Prostate gland (tissue), 2 donors: ENCODE measurements at regions of chr11 and their contacts with region 1.

Region 1: GRCh38 chr11:47715082-47715669 is at the start of gene AGBL2:
- DNase-seq: peak; percentile 52
- H3K4me3 ChIP-seq: peak within 1 kb of the TSS; percentile 64 to 81
- H3K27ac ChIP-seq: peak within 1 kb of the TSS; percentile 69 to 75
- H3K4me1 ChIP-seq: no peaks in the 10 kb centered on the region
- H3K27me3 ChIP-seq: no peaks in the 10 kb centered on the region
- CTCF ChIP-seq: no peak
- POLR2A ChIP-seq: peak; percentile 67
- total RNA-seq, gene AGBL2: 3.6 to 4.4 TPM

Region 2: DNA sequence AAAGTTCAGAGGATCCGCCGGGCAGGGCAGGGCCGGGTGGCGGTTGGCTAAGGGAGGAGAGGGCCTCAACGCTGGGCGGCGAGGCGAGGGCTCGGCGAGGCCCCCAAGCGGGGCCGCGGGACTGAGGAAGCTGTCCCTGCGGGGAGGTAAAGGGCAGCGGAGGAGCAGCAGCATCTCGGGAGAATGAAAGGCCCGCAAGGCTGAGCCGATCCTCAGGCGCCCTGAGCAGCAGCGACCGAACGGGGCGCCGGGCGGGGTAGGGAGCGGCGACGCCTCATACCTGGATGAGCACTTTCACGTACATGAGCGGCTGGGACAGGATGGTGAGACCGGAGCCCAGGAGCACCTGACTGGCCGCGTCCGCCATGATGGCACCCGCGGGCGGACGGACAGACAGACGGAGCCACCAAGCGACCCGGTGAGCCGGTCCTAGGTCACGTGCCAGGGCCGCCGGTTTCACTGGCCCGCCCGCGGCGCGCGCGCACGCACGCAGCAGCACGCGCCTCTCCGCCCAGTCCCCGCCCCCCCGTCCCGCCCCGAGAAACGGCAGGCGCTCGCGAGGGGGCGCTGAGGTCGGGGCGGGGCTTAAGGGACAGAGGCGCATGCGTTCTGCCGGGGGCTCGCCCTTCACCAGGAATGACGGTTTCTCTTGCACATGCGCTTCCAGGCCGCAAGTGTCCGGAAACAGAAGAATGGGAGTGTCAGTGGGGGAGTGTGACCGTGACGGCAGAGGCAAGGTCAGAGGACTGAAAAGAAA is 72.9 kb before region 1 on chr11 and contains the start of gene MTCH2:
- intact Hi-C with region 1: loop called (anchors 2 kb)
- DNase-seq: peak; percentile 94
- H3K4me3 ChIP-seq: peak within 1 kb of the TSS; percentile 62 to 66
- H3K27ac ChIP-seq: peak within 1 kb of the TSS; percentile 87 to 91
- H3K4me1 ChIP-seq: peaks cover 10% of the 10 kb centered on the region
- H3K27me3 ChIP-seq: no peaks in the 10 kb centered on the region
- CTCF ChIP-seq: peak; percentile 50 to 77 (median 54)
- POLR2A ChIP-seq: peak; percentile 68
- total RNA-seq, gene MTCH2: 48.4 to 56.8 TPM